Spleen (tissue), 13 donors: ENCODE measurements at regions of chr5 and their contacts with region 1.

Region 1: DNA sequence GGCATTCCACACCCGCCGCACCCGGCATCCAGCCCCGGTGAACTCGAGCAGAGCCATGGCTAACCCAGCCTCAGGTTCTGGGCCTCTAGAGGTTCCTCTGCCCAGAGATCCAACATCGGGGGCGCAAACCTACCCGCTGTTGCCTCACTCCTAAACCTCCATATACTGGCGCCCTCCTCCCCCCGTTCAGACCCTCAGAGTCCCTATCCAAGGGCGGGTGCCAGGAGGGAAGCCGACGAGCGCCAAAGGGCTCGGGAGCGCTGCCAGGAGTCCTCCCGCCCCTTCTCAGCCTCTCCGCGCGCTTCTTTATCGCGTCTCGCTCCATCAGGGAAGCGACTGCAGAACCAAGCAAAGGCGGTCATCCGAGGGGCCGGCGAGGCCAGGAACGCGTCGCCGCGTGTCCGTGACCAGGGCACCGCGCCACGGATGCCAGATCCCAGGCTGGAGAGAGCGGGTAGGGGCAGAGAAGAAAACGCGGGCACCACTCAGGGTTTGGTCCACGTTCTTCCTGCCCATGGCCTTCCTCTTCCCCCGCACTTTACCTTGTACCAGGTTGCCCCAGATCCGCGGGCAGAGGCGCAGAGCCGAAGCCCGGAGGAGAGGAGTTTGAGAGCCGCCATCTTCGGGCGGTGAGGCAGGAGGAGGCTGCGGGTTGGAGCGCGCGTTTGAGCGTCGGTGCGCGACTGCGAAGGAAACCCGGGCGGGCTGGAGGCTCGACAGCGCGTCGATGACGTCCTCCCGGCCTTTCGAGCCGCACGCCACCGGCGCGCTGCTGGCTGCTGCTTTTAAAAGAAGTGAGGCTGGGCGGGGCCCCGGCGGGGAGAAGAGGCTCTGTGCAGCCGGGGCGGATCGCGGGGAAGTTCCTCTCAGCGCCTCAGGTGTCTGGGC is at the start of gene OXCT1:
- DNase-seq: peak; percentile 98
- H3K4me3 ChIP-seq: peak within 1 kb of the TSS; percentile 66 to 95 (median 80)
- H3K27ac ChIP-seq: peak within 1 kb of the TSS; percentile 75 to 91 (median 86)
- H3K4me1 ChIP-seq: peaks cover 12 to 51% (median 22%) of the 10 kb centered on the region in 6 donors
- H3K27me3 ChIP-seq: no peaks in the 10 kb centered on the region
- CTCF ChIP-seq: peak in 5 of 11 experiments; percentile 10 to 34 (median 21)
- POLR2A ChIP-seq: peak in 2 of 3 donors; percentile 61 to 85
- total RNA-seq, gene OXCT1: 11.0 to 16.7 (median 14.2) TPM

Region 2: GRCh38 chr5:41955432-41956024 is 85.5 kb after region 1 on chr5:
- intact Hi-C with region 1: no loop called
- DNase-seq: no peak
- H3K4me3 ChIP-seq: no peak overlapping the region
- H3K27ac ChIP-seq: no peak overlapping the region
- H3K4me1 ChIP-seq: no peaks in the 10 kb centered on the region
- H3K27me3 ChIP-seq: no peaks in the 10 kb centered on the region
- CTCF ChIP-seq: no peak
- POLR2A ChIP-seq: no peak

Region 3: DNA sequence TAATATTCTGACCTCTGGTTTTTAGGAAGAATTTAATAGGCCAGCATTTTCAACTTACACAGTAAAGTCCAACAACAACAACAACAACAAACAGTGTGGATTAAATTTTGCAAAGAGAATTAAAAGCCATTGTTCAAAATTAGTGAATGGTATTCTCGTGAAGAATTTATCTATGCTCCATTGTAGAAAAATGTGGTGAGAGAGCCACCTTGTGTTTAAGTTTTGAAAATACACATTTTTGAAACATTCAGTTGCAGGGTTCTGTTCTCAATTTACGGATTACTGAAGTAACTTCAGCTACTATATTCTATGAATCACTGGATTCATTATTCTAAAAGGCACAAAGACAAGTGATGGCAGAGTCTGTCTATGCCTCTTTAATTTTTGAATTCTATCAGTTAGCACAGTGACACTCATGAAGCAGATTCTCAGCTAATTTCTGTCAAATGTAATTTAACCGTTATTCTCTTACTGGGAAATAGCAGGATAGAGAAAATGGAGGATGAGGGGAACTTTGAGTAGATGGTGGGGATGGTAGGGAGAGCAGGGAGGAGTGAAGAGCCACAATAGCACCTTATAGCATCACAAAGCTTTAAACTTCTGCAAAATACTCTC is 897.6 kb after region 1 on chr5:
- intact Hi-C with region 1: loop called (anchors 10 kb)
- DNase-seq: no peak
- H3K4me3 ChIP-seq: no peak overlapping the region
- H3K27ac ChIP-seq: no peak overlapping the region
- H3K4me1 ChIP-seq: no peaks in the 10 kb centered on the region
- H3K27me3 ChIP-seq: no peaks in the 10 kb centered on the region
- CTCF ChIP-seq: peak in 8 of 11 experiments; percentile 32 to 56 (median 44)
- POLR2A ChIP-seq: no peak

Region 4: DNA sequence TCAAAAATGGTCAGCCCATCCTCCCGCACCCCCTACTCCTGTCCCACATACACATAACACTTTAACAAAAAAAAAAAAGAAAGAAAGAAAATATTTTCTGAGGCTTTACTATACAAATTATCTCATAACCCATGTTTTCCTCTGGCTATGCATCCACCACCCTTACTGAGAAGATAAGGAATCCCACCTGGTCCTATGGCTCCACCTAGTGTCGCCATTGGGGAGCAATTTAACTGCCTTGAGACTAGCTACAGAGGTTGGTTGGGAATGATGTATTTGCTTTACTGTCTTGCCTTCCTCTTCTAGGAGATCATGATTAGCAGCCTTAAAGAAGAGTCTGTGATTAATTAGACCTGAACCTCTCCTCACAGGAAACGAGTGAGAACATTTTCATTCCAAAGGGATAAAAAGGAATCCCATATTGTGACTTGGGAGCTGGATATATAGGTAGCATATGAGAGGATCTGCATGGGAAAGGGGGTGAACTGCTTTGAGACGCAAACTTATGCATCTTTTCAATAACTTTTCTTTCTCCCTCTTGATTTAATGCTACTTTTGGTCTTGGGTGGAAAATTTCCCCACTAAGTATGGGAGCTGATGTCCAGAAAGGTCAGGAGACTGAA is 1019.4 kb after region 1 on chr5:
- intact Hi-C with region 1: loop called (anchors 10 kb)
- DNase-seq: no peak
- H3K4me3 ChIP-seq: no peak overlapping the region
- H3K27ac ChIP-seq: no peak overlapping the region
- H3K4me1 ChIP-seq: no peaks in the 10 kb centered on the region
- H3K27me3 ChIP-seq: no peaks in the 10 kb centered on the region
- CTCF ChIP-seq: peak; percentile 48 to 86 (median 76)
- POLR2A ChIP-seq: no peak